Activated naive CD4-positive, alpha-beta T cell treated with anti-CD3 and anti-CD28 coated beads for 36 hours (primary cell): ENCODE measurements at regions of chr3 and their contacts with region 1.

Region 1: GRCh38 chr3:48635222-48636021 is at the start of gene SLC26A6:
- DNase-seq: peak; percentile 97
- H3K4me3 Mint-ChIP-seq: peak within 1 kb of the TSS; percentile 89
- H3K27ac Mint-ChIP-seq: peak within 1 kb of the TSS; percentile 69
- H3K4me1 Mint-ChIP-seq: peaks cover 18% of the 10 kb centered on the region
- H3K27me3 Mint-ChIP-seq: no peaks in the 10 kb centered on the region
- total RNA-seq, gene SLC26A6: 24.3 to 24.7 TPM

Region 2: DNA sequence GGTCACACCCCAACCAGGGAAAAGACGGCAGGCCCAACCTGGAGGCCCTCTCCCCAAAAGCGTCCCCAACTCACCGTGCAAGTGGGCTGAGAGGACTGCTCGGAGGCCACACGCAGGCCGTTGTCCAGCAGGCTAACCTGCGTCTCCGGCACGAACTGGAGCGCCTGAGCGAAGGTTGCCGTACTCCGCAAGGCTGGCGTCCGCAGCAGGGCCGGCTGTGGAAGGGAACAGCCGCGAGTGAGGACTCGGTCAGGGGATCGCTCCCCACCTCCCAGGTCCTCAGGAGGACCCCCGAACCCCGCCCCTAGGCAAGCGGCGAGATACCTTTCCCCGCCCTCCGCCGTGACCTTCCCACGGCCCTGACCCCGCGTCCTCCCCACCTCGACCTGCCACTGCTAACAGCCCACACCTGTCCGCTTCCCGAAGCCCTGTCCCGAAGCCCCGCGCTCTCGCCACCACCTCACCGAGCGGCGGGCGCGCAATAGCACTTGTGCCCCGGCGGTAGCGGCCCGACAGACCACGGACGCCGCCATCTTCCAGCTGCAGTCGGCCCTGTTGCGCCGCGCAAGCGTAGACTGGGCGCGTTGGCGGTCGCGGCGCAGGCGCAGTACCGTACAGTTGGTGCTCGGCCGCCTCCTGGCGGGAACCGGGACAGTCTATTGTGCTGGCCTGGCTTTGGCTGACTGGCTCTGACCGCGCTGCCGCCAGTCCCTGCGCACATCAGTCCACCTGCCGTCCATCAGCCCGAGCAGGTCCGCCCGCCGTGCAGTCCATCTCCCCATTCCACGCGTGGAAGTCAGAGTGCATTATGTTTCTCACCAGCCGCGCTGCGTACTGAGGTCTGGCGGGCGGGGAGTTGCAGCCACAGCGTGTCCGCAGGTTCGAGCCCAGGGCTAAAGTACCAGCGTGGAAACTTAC is 26.1 kb before region 1 on chr3 and contains the start of gene UQCRC1:
- CTCF ChIA-PET with region 1: interaction called, 22 read pairs
- intact Hi-C with region 1: loop called (anchors 1 kb)
- DNase-seq: peak; percentile 94
- H3K4me3 Mint-ChIP-seq: peak within 1 kb of the TSS; percentile 99
- H3K27ac Mint-ChIP-seq: peak within 1 kb of the TSS; percentile 92
- H3K4me1 Mint-ChIP-seq: peaks cover 23% of the 10 kb centered on the region
- H3K27me3 Mint-ChIP-seq: no peaks in the 10 kb centered on the region
- total RNA-seq, gene UQCRC1: 211 to 232 TPM

Region 3: DNA sequence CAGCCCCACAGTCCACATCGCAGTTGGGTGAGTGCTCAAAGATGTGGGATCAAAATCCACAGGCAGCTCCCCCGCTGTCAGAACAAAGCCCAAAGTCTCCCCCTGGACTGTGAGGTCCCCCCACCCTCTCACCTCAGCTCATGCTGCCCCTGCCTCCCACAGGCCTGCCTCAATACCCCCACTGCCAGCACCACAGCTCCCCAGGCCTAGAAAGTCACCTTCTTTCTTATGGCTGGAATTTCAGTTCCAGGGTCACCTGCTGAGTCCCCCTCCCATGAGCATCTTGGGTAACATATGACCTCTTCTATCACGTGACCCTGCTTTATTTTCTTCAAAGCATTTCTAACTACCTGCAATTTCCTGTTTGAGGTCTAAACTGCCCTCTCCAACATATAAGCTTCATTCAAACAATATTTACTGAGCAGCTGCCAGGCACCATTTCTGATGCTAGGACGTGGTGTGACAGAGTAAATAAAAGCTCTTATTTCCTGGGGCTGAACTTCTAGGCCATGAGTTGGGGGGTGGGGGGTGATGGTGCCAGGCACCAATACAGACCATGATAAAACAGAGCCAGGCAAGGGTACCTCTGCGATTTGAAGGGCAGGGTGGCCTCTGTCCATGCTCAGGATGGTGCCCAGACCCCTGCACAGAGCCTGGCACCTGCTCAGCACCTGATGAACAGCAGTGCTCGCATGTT is 11.4 kb before region 1 on chr3:
- CTCF ChIA-PET with region 1: interaction called, 16 read pairs
- intact Hi-C with region 1: no loop called
- DNase-seq: no peak
- H3K4me3 Mint-ChIP-seq: no peak overlapping the region
- H3K27ac Mint-ChIP-seq: no peak overlapping the region
- H3K4me1 Mint-ChIP-seq: peaks cover 6% of the 10 kb centered on the region
- H3K27me3 Mint-ChIP-seq: no peaks in the 10 kb centered on the region

Region 4: GRCh38 chr3:48656061-48656840 is 20.8 kb after region 1 on chr3:
- CTCF ChIA-PET with region 1: interaction called, 7 read pairs
- intact Hi-C with region 1: loop called (anchors 1 kb)
- DNase-seq: peak; percentile 89
- H3K4me3 Mint-ChIP-seq: peak overlapping the region; percentile 76
- H3K27ac Mint-ChIP-seq: peak overlapping the region; percentile 64
- H3K4me1 Mint-ChIP-seq: peaks cover 17% of the 10 kb centered on the region
- H3K27me3 Mint-ChIP-seq: peaks cover 13% of the 10 kb centered on the region

Region 5: DNA sequence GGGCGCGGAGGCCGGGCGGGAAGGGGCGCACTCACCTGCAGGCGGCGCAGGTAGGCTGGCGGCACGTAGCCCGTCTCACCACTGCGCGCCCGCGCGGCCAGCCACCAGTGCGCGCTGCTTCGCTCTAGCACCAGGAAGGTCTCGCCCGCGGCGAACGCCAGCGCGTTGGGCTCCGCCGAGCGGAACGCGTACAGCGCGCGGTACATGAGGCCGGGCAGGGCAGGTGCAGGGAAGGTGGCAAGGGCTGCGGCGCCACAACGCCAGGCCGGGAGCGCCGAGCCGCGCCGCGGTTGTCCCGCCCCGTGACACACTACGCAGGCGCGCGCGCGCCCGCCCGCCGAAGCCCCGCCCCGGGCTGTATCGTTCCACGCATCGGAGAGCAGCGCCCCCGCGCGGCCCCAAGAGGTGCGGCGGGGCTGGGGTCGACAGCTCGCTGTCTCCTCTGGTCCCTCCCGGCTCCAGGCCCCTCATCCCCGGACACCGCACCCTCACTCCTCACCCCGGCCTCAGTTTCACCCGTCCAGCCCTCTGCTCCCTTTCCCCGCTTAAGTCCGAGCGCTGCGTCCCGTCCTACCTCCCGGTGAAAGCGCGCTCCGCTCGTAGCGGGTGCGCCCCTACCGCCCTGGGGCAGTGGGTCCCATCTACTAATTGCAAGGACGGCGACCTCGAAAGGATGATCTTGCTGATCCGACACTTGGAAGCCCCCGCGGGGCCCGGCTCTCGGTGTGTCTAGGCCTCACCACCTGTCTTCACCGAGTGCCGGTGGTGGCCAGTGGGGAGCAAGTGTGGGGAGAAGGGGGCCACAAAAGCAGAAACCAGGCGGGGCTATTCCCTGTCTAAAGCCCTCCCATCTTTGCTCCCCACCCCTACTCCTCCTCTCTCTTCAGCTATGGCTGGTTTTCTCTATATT is 50.4 kb after region 1 on chr3 and contains the start of gene NCKIPSD:
- CTCF ChIA-PET with region 1: interaction called, 3 read pairs
- intact Hi-C with region 1: loop called (anchors 2 kb)
- DNase-seq: peak; percentile 91
- H3K4me3 Mint-ChIP-seq: peak within 1 kb of the TSS; percentile 83
- H3K27ac Mint-ChIP-seq: peak within 1 kb of the TSS; percentile 73
- H3K4me1 Mint-ChIP-seq: peaks cover 25% of the 10 kb centered on the region
- H3K27me3 Mint-ChIP-seq: no peaks in the 10 kb centered on the region
- total RNA-seq, gene NCKIPSD: 27.3 to 28.7 TPM